Right cardiac atrium (tissue), 5 donors: ENCODE measurements at regions of chr9 and their contacts with region 1.

Region 1: GRCh38 chr9:95127249-95128176 is 190.0 kb downstream of the FANCC start:
- DNase-seq: peak; percentile 90 to 97 (median 94)
- ATAC-seq: peak; percentile 87 to 92
- H3K4me3 ChIP-seq: peak overlapping the region; percentile 34
- H3K27ac ChIP-seq: no peak overlapping the region
- H3K4me1 ChIP-seq: no peaks in the 10 kb centered on the region
- H3K27me3 ChIP-seq: no peaks in the 10 kb centered on the region

Region 2: DNA sequence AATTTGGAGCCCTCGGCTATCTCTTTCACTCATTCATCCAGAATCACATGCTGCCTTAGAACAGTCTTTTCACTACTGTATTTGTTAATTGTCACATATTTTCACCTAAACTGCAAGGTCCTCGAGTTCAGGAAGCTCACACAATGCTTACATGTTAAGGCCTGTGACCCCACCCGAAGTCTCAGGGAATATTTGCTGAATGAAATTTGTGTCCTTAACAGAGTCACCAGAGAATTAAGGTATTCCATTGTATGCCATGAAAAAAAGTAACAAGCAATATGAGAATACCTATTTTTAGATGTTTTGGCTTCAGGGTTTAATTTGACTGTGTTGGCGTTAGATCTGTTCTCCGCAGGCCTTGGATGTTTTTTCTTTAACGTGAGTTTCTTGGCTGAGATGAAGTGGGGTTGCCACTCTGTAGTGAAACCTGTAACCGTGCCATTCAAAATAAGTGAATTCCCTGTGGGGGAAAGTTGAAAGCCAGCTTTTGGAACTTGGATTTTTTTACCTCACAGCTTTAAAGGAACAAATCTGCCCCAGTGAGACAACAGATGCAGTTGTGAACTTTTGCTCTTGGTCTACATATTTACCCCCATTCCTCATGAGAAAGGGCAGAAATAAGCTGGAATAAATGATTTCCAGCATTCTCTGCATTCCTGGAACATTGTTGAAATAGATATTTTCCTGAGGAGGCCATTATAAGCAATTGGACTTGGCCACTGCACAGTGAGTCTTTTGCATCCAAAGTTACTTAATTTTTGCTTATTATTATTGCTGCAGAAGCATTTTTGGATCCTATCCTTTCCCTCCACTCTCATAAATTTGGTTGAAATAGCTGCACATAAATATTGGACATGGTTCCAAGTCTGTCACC is 452.3 kb before region 1 on chr9:
- intact Hi-C with region 1: loop called (anchors 2 to 5 kb)
- DNase-seq: no peak
- ATAC-seq: peak; percentile 65
- H3K4me3 ChIP-seq: no peak overlapping the region
- H3K27ac ChIP-seq: peak overlapping the region; percentile 21
- H3K4me1 ChIP-seq: peaks cover 3% of the 10 kb centered on the region
- H3K27me3 ChIP-seq: no peaks in the 10 kb centered on the region

Region 3: GRCh38 chr9:94681508-94681907 is 446.0 kb before region 1 on chr9:
- intact Hi-C with region 1: loop called (anchors 2 to 5 kb)
- DNase-seq: peak; percentile 85 to 91 (median 88)
- ATAC-seq: peak; percentile 96 to 97
- H3K4me3 ChIP-seq: no peak overlapping the region
- H3K27ac ChIP-seq: no peak overlapping the region
- H3K4me1 ChIP-seq: no peaks in the 10 kb centered on the region
- H3K27me3 ChIP-seq: no peaks in the 10 kb centered on the region

Region 4: DNA sequence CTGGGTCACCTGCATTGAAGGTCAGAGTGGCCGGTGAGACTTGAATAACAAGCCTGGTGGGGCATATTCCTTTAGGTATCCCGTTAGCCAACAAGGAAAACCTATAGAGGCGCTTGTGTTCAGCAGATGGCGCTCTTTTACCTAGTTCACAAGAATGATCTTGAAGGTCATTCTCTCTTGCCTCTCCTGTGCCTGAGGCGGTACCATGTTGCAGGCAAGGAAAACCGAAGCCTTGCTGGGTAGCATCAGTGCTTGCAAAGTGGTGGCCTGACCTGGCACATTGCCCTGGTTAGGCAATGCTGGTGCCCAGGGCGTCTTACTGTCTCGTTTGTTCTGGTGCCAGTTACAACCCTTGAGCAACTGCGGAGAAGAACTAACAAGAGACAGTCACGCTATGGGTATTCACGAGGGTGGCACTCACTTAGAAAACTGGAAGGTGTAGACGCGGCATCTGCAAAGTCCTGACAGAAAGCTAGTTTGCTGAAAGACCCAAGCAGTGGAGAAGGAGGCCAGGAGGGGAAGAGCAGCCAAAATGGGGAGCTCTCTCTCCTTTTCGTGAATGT is 344.3 kb before region 1 on chr9:
- intact Hi-C with region 1: loop called in 2 of 4 experiments (anchors 5 kb)
- DNase-seq: peak; percentile 72 to 82 (median 78)
- ATAC-seq: peak; percentile 83 to 90
- H3K4me3 ChIP-seq: no peak overlapping the region
- H3K27ac ChIP-seq: peak overlapping the region; percentile 63
- H3K4me1 ChIP-seq: peaks cover 6% of the 10 kb centered on the region
- H3K27me3 ChIP-seq: no peaks in the 10 kb centered on the region

Region 5: DNA sequence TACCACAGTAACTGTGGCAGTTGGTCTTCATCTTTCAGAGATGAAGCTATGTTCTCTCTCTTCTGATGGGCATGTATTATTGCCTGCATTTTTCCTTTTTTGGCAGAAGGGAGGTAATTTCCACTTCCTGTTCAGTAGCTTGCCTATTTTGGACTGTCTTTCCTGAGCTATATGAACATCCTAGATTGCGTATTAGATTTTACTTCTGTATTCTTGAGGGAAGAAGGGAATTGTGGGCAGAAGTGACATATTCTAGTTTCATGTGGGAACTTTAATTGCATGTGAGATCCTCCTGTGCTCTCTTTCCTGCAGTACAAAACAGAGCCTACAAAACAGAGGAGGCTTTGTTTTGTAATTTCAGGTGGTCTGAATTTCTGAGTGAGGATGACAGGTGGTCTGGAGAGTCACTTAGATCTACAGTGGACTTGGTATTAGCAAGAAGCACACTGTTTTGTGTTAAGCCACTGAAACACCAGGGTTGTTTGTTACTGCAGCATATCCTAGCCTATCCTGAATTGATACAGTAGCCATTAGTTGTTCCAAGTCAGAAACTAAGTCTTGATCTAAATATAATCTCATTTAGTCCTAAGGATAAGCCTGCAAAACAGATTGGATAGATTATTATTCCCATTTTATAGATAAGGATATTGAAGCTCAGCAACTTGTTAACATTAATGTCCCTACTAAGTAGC is 332.9 kb before region 1 on chr9:
- intact Hi-C with region 1: loop called in 2 of 4 experiments (anchors 5 kb)
- DNase-seq: no peak
- ATAC-seq: no peak
- H3K4me3 ChIP-seq: no peak overlapping the region
- H3K27ac ChIP-seq: no peak overlapping the region
- H3K4me1 ChIP-seq: no peaks in the 10 kb centered on the region
- H3K27me3 ChIP-seq: no peaks in the 10 kb centered on the region